Gastrocnemius medialis (tissue), 4 donors: ENCODE measurements at regions of chr14 and their contacts with region 1.

Region 1: GRCh38 chr14:83441801-83442200 is 1908.1 kb upstream of the SEL1L start:
- DNase-seq: no peak
- ATAC-seq: no peak
- H3K4me3 ChIP-seq: no peak overlapping the region
- H3K27ac ChIP-seq: no peak overlapping the region
- H3K4me1 ChIP-seq: no peaks in the 10 kb centered on the region
- H3K27me3 ChIP-seq: no peaks in the 10 kb centered on the region
- CTCF ChIP-seq: no peak
- POLR2A ChIP-seq: no peak

Region 2: GRCh38 chr14:83395321-83395720 is 46.5 kb before region 1 on chr14:
- in situ Hi-C with region 1: no loop called
- intact Hi-C with region 1: loop called (anchors 2 kb)
- DNase-seq: no peak
- ATAC-seq: no peak
- H3K4me3 ChIP-seq: no peak overlapping the region
- H3K27ac ChIP-seq: no peak overlapping the region
- H3K4me1 ChIP-seq: no peaks in the 10 kb centered on the region
- H3K27me3 ChIP-seq: no peaks in the 10 kb centered on the region
- CTCF ChIP-seq: no peak
- POLR2A ChIP-seq: no peak